PC-9 (cell line): ENCODE measurements at regions of chr2 and their contacts with region 1.

Region 1: GRCh38 chr2:19863303-19864041 is 38.3 kb downstream of the TTC32 start:
- DNase-seq: peak in 1 of 2 experiments; percentile 58
- H3K4me3 ChIP-seq: no peak overlapping the region
- H3K27ac ChIP-seq: no peak overlapping the region
- H3K4me1 ChIP-seq: peaks cover 14% of the 10 kb centered on the region
- H3K27me3 ChIP-seq: no peaks in the 10 kb centered on the region
- CTCF ChIP-seq: peak; percentile 98

Region 2: DNA sequence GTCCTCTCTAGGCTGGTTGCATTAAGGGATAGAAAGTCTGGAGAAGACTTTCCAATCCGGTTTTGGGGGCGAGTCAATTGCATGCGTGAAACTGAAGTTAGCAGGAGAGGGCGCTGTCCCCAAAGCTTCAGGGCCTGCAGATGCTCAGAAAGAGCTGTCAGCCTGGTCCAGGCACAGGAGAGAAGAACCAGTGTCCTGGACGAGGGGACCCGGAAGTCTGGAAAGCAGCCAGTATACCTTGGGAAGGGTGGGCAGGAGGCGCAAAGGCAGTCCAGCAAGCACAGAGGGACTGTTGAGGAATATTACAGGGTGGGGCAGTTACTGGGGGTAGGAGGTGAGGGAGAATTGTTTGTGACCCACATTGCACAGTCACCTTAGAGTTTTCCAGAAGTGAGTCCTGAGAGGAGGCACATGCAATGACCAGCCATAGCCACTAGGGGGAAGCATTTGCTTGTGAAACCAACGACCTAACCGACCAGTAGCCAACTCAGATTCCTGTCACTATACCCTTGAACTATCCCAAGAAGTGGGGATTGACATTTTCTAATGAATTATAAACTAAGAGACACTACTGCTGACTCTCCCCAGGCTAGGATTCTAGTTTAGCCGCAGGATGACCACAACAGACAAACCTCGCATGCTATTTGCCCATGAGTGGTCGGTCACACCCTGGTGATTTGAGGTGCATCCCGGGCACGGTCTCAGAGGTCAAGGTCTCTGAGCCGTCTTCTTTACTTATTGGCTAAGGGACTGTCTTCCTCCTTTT is 1475.8 kb before region 1 on chr2:
- CTCF ChIA-PET with region 1: no interaction called
- POLR2A ChIA-PET with region 1: no interaction called
- intact Hi-C with region 1: loop called (anchors 1 kb)
- DNase-seq: peak; percentile 55 to 70
- H3K4me3 ChIP-seq: no peak overlapping the region
- H3K27ac ChIP-seq: no peak overlapping the region
- H3K4me1 ChIP-seq: no peaks in the 10 kb centered on the region
- H3K27me3 ChIP-seq: no peaks in the 10 kb centered on the region
- CTCF ChIP-seq: peak; percentile 98

Region 3: DNA sequence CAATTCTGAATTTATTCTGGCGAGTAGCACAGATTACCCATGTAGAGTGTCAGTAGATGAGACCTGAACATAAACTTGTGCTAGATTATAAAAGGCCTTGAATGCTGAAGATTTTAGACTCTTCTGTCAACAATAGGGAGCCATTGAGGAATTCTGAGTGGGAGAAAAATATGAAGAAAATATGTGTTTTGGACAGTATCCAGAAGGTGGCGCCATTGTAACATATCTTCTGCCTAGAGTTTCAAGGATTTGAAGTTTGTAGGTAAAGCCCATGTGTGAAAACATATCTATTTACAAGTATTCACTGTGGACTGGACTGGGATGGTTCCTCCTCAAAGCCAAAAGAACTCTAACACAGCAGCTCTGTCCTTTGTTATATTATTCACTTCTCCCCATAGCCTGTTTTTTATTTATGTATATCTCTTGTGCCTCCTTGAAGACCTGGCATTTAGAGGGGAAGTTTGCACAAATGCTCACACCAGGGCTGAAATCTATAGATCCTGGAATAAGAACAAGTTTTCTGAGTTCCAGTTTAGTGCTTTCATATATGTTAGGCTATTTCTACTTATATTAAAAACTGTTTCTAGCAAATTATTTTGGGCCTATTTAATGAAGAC is 1427.9 kb before region 1 on chr2:
- CTCF ChIA-PET with region 1: no interaction called
- POLR2A ChIA-PET with region 1: no interaction called
- intact Hi-C with region 1: loop called (anchors 1 kb)
- DNase-seq: peak; percentile 25 to 45
- H3K4me3 ChIP-seq: no peak overlapping the region
- H3K27ac ChIP-seq: no peak overlapping the region
- H3K4me1 ChIP-seq: no peaks in the 10 kb centered on the region
- H3K27me3 ChIP-seq: no peaks in the 10 kb centered on the region
- CTCF ChIP-seq: peak; percentile 90

Region 4: DNA sequence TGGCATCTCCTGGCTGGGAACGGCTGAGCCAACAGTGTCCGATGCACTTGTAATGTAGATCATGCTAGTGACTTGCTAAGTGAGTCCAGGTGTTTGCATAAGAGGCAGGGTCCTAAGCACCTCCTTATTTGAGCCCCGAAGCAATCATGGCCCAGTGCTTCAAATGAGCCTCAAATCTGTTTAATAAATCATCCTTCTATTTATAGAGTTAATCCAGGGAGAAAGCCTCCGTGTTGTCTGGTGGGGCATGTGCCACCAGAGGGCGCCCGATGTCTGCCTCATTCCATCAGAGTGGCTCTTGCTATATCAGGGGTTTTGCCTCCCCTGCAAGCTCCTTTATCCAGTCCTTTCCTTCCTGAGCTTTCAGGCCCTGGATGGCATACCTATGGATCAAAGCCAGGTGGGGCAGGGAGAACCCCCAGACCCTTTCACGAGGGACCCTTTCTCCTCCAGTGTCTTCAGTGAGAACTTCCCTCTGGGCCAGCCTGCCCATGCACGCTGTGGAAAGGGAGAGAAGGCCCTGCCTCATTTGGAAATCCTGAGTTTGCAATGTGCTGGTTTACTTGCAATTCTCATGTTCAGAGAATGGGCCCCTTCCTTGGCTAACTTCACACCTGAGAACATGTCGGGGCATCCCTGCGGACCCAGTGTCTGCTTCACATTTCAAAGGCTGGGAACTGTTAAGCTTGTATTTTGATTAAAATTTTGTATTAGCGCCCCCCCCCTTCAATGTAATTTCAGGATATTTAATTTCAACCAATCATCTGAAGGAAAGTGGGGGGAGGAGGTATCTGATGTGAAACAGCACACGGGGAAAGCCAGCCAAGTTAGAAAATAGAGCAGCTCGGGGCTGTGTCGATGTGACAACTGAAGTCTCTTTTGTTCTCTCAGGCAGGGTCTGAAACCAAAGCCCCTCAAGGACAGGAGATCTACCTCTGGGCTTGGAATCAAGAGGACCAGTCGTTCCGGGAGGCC is 1342.7 kb before region 1 on chr2:
- CTCF ChIA-PET with region 1: no interaction called
- POLR2A ChIA-PET with region 1: no interaction called
- intact Hi-C with region 1: loop called (anchors 2 kb)
- DNase-seq: peak; percentile 56 to 73
- H3K4me3 ChIP-seq: no peak overlapping the region
- H3K27ac ChIP-seq: no peak overlapping the region
- H3K4me1 ChIP-seq: 0 out of 2 replicates have a peak, but pooled peaks cover 12% of the 10 kb centered on the region
- H3K27me3 ChIP-seq: no peaks in the 10 kb centered on the region
- CTCF ChIP-seq: peak; percentile 97

Region 5: GRCh38 chr2:19369341-19369955 is 494.0 kb before region 1 on chr2:
- CTCF ChIA-PET with region 1: no interaction called
- POLR2A ChIA-PET with region 1: no interaction called
- intact Hi-C with region 1: loop called (anchors 1 kb)
- DNase-seq: no peak
- H3K4me3 ChIP-seq: no peak overlapping the region
- H3K27ac ChIP-seq: no peak overlapping the region
- H3K4me1 ChIP-seq: no peaks in the 10 kb centered on the region
- H3K27me3 ChIP-seq: no peaks in the 10 kb centered on the region
- CTCF ChIP-seq: peak; percentile 70

Region 6: GRCh38 chr2:19673213-19673791 is 190.2 kb before region 1 on chr2:
- CTCF ChIA-PET with region 1: no interaction called
- POLR2A ChIA-PET with region 1: no interaction called
- intact Hi-C with region 1: loop called (anchors 5 kb)
- DNase-seq: peak; percentile 10 to 67
- H3K4me3 ChIP-seq: no peak overlapping the region
- H3K27ac ChIP-seq: peak overlapping the region; percentile 0; the same call in 1 of the 2 replicates
- H3K4me1 ChIP-seq: peaks cover 31% of the 10 kb centered on the region
- H3K27me3 ChIP-seq: no peaks in the 10 kb centered on the region
- CTCF ChIP-seq: no peak

Region 7: DNA sequence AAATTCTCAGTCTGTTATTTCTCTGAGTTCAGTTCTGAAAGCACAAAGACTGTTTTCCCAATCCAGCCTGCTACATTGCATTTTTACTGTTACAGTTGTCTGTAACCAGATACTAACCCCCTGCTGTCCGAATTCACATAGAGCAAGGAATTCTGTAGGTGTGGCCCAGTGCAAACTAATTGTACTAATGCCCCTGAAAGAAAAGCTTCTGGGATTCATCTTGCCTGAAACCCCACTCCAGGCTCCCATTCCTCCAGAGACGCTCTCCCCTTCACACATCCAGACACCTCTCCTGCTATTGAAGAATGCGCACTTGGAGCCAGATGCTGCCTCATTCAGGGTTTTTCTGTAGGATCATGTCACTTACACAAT is 88.7 kb before region 1 on chr2:
- CTCF ChIA-PET with region 1: no interaction called
- POLR2A ChIA-PET with region 1: no interaction called
- intact Hi-C with region 1: loop called (anchors 5 kb)
- DNase-seq: peak in 1 of 2 experiments; percentile 20
- H3K4me3 ChIP-seq: no peak overlapping the region
- H3K27ac ChIP-seq: peak overlapping the region; percentile 42
- H3K4me1 ChIP-seq: peaks cover 17% of the 10 kb centered on the region
- H3K27me3 ChIP-seq: no peaks in the 10 kb centered on the region
- CTCF ChIP-seq: no peak

Region 8: DNA sequence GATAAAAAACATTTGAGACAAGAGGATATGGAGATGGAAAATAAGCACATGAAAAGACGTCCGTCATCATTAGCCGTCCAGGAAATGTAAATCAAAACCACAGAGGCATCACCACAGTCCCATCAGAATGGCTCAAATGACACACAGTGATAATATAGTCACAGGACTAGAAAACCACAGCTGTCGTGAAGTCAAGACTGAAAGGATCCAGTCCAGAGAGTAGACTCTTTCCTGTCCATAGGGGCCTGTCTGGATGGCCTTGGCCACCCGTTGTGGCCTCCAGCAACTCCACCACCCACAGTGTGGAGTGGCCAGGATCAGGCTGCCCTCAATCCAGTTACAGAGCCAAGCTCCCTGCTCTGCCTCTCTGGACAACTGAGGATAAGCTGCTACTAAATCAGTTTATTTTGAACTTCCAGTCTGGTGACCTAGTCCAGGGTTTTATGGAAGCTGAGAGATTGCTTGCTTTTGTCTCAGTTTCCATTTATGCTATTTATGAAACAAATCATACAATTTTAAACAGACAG is 643.8 kb after region 1 on chr2:
- CTCF ChIA-PET with region 1: no interaction called
- POLR2A ChIA-PET with region 1: no interaction called
- intact Hi-C with region 1: no loop called
- DNase-seq: peak in 1 of 2 experiments; percentile 30
- H3K4me3 ChIP-seq: no peak overlapping the region
- H3K27ac ChIP-seq: no peak overlapping the region
- H3K4me1 ChIP-seq: no peaks in the 10 kb centered on the region; the same call in 1 of the 2 replicates
- H3K27me3 ChIP-seq: no peaks in the 10 kb centered on the region
- CTCF ChIP-seq: no peak